Activated CD4-positive, alpha-beta T cell treated with anti-CD3 and anti-CD28 coated beads, Interleukin-2, amount 10 ng/mL, durations not matched to agents 24 days and 14 days (primary cell): ENCODE measurements at regions of chr9 and their contacts with region 1.

Region 1: DNA sequence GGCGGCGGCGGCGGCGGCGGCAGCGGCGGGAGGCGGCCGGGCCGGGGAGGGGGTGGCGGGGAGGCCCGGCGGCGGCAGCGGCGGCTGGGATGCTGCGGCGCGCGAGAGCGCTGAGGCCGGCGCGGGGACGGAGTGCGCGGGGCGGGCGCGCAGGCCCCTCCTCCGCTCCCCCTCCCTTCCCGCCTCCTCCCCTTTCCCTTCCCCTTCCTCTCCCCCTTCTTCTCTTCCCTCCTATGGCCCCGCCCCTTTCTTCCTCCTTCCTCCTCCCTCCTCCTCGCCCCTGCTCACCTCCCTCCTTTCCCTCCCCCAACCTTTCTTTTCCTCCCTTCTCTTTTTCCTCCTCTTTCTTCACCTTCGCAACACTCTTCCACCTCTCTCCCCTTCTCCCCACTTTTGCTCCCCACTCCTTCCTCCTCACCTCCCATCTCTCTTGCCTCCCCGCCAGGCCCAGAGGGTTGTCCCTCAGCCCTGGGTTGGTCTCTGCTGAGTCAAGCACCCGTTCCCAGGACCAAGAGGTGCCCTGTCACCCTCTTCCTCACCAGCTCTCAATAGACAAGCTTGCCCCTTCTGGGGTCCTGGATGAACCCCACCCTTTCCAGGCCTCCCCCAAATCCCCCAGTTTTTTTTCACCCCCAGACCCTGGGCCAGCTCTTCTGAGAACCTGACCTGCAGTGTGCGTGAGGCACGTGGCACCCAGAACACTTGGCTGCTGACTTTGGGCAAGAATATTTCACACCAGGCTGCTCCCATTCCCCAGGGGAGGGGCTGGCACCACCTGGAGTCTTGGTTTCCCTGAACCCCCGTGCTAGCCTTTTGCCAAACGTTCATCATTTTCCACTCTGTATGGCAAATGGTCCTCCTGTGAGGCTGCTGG is at the start of gene SEMA4D:
- DNase-seq: peak; percentile 86
- H3K4me3 Mint-ChIP-seq: peak within 1 kb of the TSS; percentile 92
- H3K27ac Mint-ChIP-seq: peak within 1 kb of the TSS; percentile 94
- H3K4me1 Mint-ChIP-seq: peaks cover 79% of the 10 kb centered on the region
- H3K27me3 Mint-ChIP-seq: no peaks in the 10 kb centered on the region
- total RNA-seq, gene SEMA4D: 368 and 370 TPM in 2 replicates

Region 2: DNA sequence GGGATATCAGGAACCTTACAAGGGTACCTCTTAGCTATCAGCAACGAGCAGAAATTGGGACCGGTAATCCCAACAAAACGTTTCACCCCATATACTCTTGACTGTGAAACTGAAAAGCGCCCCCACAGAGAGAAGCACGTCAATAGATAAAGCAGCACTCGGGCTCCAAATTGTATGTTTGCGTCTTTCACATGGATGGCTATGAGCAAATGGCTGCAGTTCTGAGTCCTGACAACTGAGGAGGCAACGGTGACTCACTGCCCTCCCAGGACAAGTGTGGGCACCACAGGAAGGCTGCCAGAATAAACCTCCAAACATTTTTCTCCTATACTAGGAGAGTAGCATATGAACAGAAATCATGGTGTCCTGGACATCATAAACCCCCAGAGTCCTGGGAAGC is 37.0 kb before region 1 on chr9:
- intact Hi-C with region 1: loop called (anchors 2 kb)
- DNase-seq: peak; percentile 70
- H3K4me3 Mint-ChIP-seq: peak overlapping the region; percentile 59
- H3K27ac Mint-ChIP-seq: peak overlapping the region; percentile 91
- H3K4me1 Mint-ChIP-seq: peaks cover 96% of the 10 kb centered on the region
- H3K27me3 Mint-ChIP-seq: no peaks in the 10 kb centered on the region

Region 3: DNA sequence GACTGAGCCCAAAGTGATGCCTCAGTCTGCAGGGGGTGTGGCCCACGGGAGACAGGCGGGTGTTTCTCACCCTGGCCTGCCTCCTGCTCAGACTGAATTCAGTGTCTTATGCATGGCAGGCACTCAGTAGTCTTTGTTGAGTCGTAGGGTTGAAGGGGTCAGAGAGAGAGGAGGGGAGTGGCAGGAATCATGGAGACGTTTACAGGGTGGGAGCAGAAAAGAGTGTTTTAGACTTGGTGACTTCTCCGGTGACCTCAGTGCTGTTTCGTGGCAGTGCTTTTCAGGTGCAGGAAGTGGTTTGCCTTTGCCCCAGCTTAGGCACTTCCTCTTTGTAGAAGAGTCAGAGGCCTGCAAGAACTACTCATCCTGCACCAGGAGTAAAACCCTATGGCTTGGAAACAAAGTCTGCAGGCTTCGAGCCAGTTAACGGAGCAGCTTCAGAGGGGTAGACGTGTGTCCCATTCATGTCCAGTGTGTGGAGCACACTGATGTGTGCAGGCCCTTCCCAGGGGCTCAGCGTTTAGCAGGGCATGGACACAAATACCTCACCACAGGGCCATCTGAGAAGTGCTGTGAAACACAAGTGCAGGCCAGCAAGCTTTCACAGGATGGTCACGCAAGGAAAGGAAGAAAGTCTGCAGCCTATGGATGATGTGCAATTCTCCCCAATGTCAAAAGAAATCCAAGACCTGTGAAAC is 24.2 kb after region 1 on chr9:
- intact Hi-C with region 1: loop called (anchors 1 kb)
- DNase-seq: peak; percentile 94
- H3K4me3 Mint-ChIP-seq: peak overlapping the region; percentile 68
- H3K27ac Mint-ChIP-seq: peak overlapping the region; percentile 94
- H3K4me1 Mint-ChIP-seq: peaks cover 81% of the 10 kb centered on the region
- H3K27me3 Mint-ChIP-seq: no peaks in the 10 kb centered on the region

Region 4: DNA sequence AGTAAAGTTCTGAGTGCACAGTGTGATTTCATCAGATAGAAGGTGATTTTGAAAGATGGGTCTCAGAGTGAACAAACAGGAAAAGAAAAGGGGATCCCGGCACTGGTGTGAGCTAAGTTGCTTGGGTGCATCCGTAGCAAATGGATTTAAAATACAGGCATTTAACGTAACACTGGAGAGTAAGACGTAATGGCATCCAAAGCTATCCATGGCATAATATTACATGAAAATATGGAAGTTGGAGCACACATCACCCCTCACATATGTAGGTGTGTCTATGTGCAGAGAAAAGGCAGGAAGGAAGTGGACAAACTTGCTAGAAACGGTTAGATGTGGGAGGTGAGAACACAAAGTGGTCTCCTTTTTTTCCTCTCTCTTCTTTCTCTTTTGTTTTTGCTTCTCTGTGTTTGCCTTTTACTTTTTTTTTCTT is 37.9 kb after region 1 on chr9:
- intact Hi-C with region 1: loop called (anchors 2 kb)
- DNase-seq: peak; percentile 83
- H3K4me3 Mint-ChIP-seq: peak overlapping the region; percentile 73
- H3K27ac Mint-ChIP-seq: peak overlapping the region; percentile 90
- H3K4me1 Mint-ChIP-seq: peaks cover 80% of the 10 kb centered on the region
- H3K27me3 Mint-ChIP-seq: no peaks in the 10 kb centered on the region